Dendritic cell treated with granulocyte-macrophage colony-stimulating factor and Interleukin-4, amounts not matched to agents 40 ng/mL and 50 ng/mL, for 4 days (primary cell): ENCODE measurements at regions of chr10 and their contacts with region 1.

Region 1: DNA sequence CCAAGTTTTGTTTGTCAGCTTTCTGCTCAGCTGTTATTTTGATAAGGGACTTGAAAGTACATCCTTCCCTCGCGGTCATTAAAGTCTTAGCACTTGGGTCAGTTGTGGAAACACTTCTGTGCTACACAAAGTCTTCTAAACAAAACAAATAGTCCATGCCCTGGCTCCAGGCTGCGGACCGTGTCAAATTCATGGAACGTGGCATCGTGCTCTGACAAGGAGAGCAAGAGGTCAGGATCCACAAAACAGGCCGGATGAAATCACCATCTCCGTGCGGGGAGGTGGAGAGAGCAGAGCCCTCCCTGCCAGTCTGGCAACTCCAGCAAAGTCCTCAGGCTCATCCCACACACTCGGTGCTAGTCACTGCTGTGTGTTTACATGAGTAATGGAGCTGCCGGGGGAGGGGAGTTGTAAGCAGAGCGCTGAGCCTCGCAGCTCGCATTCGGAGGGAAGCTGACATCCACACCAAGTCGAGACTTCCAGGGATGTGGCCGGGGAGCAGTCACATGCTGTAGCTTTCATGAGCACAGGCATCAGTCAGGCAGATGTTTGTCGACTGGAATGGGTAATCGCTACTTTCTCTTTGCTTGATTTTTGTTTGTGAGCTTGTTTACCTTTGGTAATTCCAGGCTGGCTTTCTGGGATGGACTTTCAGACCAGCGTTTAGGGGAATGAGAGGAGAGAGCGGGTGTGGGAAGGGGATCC is 147.6 kb downstream of the ARID5B start:
- H3K4me3 Mint-ChIP-seq: peak overlapping the region; percentile 86
- H3K27ac Mint-ChIP-seq: peak overlapping the region; percentile 92
- H3K4me1 Mint-ChIP-seq: peaks cover 82% of the 10 kb centered on the region
- H3K27me3 Mint-ChIP-seq: no peaks in the 10 kb centered on the region

Region 2: GRCh38 chr10:62082729-62083411 is 33.8 kb after region 1 on chr10:
- intact Hi-C with region 1: loop called (anchors 5 kb)
- H3K4me3 Mint-ChIP-seq: peak overlapping the region; percentile 50
- H3K27ac Mint-ChIP-seq: peak overlapping the region; percentile 84
- H3K4me1 Mint-ChIP-seq: peaks cover 28% of the 10 kb centered on the region
- H3K27me3 Mint-ChIP-seq: no peaks in the 10 kb centered on the region

Region 3: GRCh38 chr10:62109587-62110293 is 60.7 kb after region 1 on chr10:
- intact Hi-C with region 1: loop called (anchors 2 kb)
- H3K4me3 Mint-ChIP-seq: no peak overlapping the region
- H3K27ac Mint-ChIP-seq: peak overlapping the region; percentile 91
- H3K4me1 Mint-ChIP-seq: peaks cover 67% of the 10 kb centered on the region
- H3K27me3 Mint-ChIP-seq: no peaks in the 10 kb centered on the region

Region 4: DNA sequence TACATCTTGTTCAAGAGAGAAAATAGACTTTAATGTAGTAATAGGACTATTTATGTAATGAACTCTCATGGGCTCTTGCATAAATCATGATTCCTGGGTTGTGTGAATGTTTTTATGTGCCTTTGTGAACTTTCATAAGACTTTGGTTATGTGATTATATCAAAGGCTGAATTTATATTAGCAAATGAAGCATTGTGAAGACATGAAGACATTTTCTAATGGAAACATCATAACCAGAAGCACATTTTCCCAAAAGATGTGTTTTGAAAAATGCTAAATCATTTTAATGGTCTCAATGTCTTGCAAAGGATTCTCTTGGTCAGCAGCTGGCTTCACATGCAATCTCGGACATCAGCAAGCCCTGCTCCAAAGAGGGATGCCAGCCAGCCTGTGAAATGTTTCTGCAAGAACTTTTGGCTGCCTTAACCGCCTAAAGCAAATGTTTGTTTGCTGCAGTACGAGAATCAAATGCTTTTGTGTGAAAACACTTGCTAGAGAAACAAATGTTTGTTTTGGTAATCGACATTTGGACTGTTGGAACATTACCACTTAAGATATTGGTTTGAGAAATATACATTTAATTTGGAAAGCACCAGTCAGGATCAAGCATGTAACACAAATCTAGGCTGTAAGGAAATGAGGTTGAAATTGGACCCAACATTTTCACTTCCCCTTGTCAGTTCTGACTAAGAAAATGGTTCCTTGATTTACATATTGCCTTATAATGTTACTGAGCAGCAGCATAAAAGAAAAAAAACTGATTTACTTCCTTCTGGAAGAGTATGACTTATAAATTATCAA is 117.5 kb after region 1 on chr10:
- intact Hi-C with region 1: loop called (anchors 5 kb)
- H3K4me3 Mint-ChIP-seq: no peak overlapping the region
- H3K27ac Mint-ChIP-seq: peak overlapping the region; percentile 92
- H3K4me1 Mint-ChIP-seq: peaks cover 28% of the 10 kb centered on the region
- H3K27me3 Mint-ChIP-seq: no peaks in the 10 kb centered on the region